ENCODE measurements at regions of chr17 and their contacts with region 1.

Region 1: GRCh38 chr17:8522577-8522976 is 86.9 kb downstream of the NDEL1 start:
- DNase-seq: no peak
- H3K4me3 ChIP-seq: no peak overlapping the region
- H3K27ac ChIP-seq: no peak overlapping the region
- H3K27me3 ChIP-seq: no peaks in the 10 kb centered on the region
- CTCF ChIP-seq: no peak

Region 2: GRCh38 chr17:8494510-8495111 is 28.0 kb before region 1 on chr17:
- CTCF ChIA-PET with region 1: no interaction called
- POLR2A ChIA-PET with region 1: interaction called, 13 read pairs
- DNase-seq: no peak
- H3K4me3 ChIP-seq: no peak overlapping the region
- H3K27ac ChIP-seq: no peak overlapping the region
- H3K27me3 ChIP-seq: no peaks in the 10 kb centered on the region
- CTCF ChIP-seq: no peak

Region 3: DNA sequence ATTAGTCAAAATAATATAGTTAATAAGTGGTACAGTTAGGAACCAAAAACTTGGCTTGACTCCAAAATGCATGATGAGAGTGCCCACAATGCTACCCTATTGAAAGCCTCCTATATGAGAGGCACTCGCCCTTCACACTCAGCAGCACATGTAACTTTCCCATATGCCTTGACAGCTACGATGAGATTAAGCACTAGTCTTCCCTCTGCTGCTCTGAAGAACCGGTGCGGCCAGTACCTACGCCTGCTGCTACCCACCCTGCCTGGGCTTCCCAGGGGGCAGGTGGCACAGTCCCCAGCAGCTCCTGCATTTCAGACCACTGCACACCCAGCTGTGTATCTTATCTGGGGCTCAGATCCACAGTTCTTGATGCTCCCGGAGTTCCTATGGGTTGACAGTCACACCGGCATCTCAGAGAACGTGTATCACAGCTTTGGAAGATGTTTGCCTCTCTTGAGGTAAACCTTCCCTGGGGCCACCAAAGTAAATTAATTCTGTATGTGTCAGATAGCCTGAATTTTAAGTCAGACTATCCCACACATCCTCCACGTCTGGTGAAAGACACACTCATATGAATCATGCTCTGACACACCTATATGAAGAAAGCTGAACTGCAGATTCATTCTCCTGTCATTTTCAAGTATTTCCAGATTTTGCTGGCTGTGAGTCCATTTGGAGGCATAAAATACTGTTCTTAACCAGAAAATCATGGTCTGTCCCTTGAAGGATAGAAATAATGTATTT is 30.2 kb after region 1 on chr17:
- CTCF ChIA-PET with region 1: no interaction called
- POLR2A ChIA-PET with region 1: no interaction called
- DNase-seq: no peak
- H3K4me3 ChIP-seq: no peak overlapping the region
- H3K27ac ChIP-seq: no peak overlapping the region
- H3K27me3 ChIP-seq: no peaks in the 10 kb centered on the region
- CTCF ChIP-seq: no peak